ENCODE measurements at regions of chr3 and their contacts with region 1.

Region 1: GRCh38 chr3:121834696-121835464 is at the starts of genes EAF2 and IQCB1:
- DNase-seq: peak; percentile 95
- H3K4me3 Mint-ChIP-seq: peak within 1 kb of the TSS; percentile 98
- H3K27ac Mint-ChIP-seq: peak within 1 kb of the TSS; percentile 97
- H3K4me1 Mint-ChIP-seq: peaks cover 60% of the 10 kb centered on the region
- H3K27me3 Mint-ChIP-seq: no peaks in the 10 kb centered on the region
- total RNA-seq, gene EAF2: 15.3 and 18.8 TPM in 2 replicates
- total RNA-seq, gene IQCB1: 45.2 and 50.4 TPM in 2 replicates

Region 2: DNA sequence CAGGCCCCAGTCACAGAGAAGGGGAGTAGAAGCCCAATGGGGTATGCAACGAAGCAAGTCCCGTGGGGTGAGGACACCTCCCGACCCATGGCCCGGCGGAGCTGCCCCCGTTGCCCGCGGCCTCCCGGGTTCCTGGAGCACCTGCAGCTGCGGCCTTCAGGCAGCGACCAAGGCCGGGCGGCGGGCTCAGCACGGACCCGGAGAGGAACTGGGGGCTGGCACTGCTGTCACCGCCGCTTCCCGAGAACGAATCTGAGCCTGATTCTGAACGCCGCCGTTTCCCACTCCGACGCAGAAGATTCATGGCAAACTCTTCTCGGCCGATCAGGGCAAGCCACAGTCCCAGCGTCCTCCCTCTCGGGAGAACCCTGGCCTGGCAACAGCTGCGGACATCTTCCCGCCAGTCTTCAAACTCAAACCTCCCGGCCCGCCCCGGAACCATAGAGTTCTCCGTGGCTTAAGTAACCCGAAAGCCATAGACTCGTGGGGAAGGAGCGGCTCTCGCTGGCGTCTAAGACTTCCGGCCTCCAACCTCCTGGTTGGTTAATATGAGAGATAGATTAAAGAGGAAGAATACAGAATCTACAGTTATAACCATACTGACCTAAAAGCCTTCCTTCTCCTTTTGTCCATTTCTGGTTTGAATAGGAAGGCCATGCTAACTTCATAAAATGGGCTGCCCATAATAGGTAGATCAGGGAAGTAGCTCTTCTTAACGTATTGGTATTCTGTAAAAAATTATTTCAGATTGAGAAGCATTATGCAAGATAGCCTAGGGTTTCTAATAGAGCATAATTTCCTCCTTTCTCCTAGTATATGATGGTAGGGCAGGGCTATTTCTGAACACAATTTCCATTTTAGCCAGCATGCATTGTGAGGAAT is 289.1 kb before region 1 on chr3 and contains the start of gene POLQ:
- intact Hi-C with region 1: loop called (anchors 1 kb)
- DNase-seq: peak; percentile 83
- H3K4me3 Mint-ChIP-seq: peak within 1 kb of the TSS; percentile 89
- H3K27ac Mint-ChIP-seq: peak within 1 kb of the TSS; percentile 88
- H3K4me1 Mint-ChIP-seq: peaks cover 32% of the 10 kb centered on the region
- H3K27me3 Mint-ChIP-seq: peaks cover 2% of the 10 kb centered on the region
- total RNA-seq, gene POLQ: 29.0 and 30.1 TPM in 2 replicates

Region 3: GRCh38 chr3:121557426-121557934 is 277.4 kb before region 1 on chr3:
- intact Hi-C with region 1: no loop called
- DNase-seq: no peak
- H3K4me3 Mint-ChIP-seq: no peak overlapping the region
- H3K27ac Mint-ChIP-seq: no peak overlapping the region
- H3K4me1 Mint-ChIP-seq: peaks cover 9% of the 10 kb centered on the region
- H3K27me3 Mint-ChIP-seq: no peaks in the 10 kb centered on the region

Region 4: DNA sequence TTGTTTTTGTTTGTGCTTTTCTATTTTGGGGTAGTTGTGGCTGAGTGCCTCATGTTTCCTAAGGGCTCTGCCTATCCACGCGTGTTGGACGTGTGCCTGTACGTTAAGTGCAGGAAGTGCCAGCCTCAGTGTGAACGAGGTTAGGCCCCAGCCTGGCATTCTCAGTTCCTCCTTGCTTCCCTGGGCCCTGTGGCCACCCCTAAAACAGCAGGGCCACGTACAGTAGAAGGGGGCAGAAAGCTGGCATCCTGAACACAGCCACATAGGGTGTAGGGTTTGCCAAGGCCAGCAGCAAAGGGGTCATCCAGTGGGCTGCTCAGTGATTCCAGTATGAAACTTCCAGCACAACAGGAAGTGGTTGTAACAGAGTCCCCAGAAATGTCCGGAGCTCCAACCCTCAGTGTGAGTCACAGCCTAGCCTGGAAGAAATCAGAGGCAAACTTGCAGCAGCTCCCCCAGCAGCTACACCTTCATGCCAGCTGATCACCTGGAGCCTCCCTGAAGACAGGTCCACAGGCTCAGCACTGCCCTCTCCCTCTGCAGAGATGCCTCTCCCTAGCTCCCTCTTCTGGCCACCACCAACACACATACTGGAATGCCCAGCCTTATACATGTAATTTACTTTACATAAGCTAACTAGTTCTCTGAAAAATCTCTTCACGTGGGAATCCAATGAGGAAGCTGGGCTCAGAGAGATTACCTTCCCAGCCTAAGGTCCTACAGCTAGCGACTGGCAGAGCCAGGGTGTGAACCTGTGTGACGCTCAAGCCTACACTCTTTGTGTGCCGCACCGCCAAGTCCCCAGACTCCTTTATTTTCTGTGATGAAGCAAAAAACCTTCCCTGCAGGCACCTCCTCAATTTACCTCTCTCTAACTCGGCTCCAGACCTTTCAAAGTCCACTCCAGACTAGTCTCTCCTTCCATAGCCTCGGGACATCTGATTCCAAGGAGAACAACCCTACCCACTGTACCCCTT is 160.6 kb after region 1 on chr3:
- intact Hi-C with region 1: loop called (anchors 5 kb)
- DNase-seq: no peak
- H3K4me3 Mint-ChIP-seq: no peak overlapping the region
- H3K27ac Mint-ChIP-seq: no peak overlapping the region
- H3K4me1 Mint-ChIP-seq: peaks cover 45% of the 10 kb centered on the region
- H3K27me3 Mint-ChIP-seq: no peaks in the 10 kb centered on the region

Region 5: DNA sequence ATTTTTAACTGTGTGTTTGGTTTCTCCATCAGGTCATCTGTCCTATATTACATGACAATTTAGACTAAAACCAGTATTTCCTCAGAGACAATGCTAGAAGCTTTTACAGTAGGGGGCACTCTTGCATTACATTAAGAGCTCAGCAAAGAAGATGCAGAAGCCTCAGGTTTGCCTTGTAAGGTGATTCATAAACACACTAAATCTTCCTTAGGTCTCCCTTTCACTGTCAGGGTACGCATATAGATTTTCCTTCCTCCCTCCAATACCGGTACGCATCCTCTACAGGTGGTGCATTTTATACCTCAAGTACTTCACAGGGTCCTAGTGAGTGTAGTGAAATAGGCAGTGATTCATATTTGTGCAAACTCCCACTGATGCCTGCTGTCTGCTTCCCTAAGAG is 266.8 kb after region 1 on chr3:
- intact Hi-C with region 1: loop called (anchors 2 kb)
- DNase-seq: no peak
- H3K4me3 Mint-ChIP-seq: peak overlapping the region; percentile 47
- H3K27ac Mint-ChIP-seq: peak overlapping the region; percentile 87
- H3K4me1 Mint-ChIP-seq: no peaks in the 10 kb centered on the region
- H3K27me3 Mint-ChIP-seq: no peaks in the 10 kb centered on the region

Region 6: GRCh38 chr3:122383771-122384697 is 549.2 kb after region 1 on chr3 and contains the start of gene FAM162A:
- intact Hi-C with region 1: loop called (anchors 2 kb)
- DNase-seq: peak; percentile 93
- H3K4me3 Mint-ChIP-seq: peak within 1 kb of the TSS; percentile 96
- H3K27ac Mint-ChIP-seq: peak within 1 kb of the TSS; percentile 90
- H3K4me1 Mint-ChIP-seq: peaks cover 81% of the 10 kb centered on the region
- H3K27me3 Mint-ChIP-seq: no peaks in the 10 kb centered on the region
- total RNA-seq, gene FAM162A: 63.7 and 70.0 TPM in 2 replicates

Region 7: DNA sequence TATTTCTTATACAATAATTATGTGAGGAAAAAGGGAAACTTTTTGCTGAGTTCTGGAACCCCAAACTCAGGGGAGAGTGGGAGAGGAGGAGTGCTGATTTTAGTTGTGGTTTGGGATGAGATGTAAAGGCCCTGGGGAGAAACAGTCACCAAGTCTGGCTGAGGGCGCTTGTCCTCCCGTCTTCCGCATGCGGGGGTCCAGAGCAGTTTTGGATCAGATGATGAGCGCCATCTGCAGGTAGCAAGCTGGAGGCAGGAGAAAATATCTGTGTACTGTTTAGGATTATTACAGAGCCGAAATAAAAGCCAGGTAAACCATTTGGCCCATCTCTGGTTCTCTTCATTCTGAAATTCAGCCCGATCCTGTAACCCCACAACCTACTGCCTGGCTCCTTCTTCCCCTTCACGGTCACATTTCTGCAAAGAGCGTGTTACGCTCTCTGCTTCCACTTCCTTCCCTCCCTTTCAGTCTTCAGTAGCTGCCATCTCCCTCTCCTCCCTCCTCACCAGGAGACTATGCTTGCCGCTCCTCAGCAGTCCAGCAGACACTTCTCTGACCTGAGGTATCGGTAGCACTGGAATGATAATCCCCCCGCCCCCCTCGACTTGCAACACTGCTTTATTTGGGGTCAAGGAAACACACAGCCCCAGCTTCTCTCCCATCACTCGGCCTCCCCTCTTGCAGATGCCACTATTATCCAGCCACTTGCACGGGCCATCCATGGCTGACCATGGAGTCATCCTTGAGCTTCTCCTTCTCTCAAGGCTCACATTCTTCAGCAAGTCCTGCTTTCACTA is 844.4 kb after region 1 on chr3:
- intact Hi-C with region 1: loop called (anchors 5 kb)
- DNase-seq: peak; percentile 77
- H3K4me3 Mint-ChIP-seq: peak overlapping the region; percentile 95
- H3K27ac Mint-ChIP-seq: peak overlapping the region; percentile 97
- H3K4me1 Mint-ChIP-seq: peaks cover 54% of the 10 kb centered on the region
- H3K27me3 Mint-ChIP-seq: no peaks in the 10 kb centered on the region